ENCODE measurements at regions of chr3 and their contacts with region 1.

Region 1: GRCh38 chr3:138230525-138230924 is 43.4 kb downstream of the ARMC8 start:
- DNase-seq: no peak
- H3K4me3 ChIP-seq: no peak overlapping the region
- H3K27ac ChIP-seq: no peak overlapping the region
- H3K4me1 ChIP-seq: no peaks in the 10 kb centered on the region
- H3K27me3 ChIP-seq: no peaks in the 10 kb centered on the region
- CTCF ChIP-seq: no peak
- POLR2A ChIP-seq: no peak

Region 2: DNA sequence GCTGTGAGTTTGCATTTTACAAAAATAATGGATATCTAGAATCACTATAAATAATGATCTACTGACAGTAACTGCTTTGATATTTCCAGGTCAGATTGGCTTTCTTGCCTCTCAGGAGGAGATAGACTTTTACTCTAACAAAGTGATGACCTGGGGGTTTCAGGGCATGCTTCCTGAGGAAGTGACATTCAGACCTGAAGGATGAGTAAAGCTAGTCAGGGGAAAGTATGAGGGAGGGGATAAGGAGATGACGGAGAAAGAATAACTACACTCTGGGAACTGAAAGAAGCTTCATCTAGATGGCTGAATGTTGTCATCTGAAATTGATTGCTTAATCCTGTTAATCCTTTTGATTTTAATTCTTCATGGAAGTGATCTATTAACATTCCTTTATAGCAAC is 11.3 kb before region 1 on chr3:
- CTCF ChIA-PET with region 1: interaction called, 6 read pairs
- POLR2A ChIA-PET with region 1: no interaction called
- dilution Hi-C with region 1: no loop called
- intact Hi-C with region 1: loop called (anchors 2 kb)
- DNase-seq: peak; percentile 64
- H3K4me3 ChIP-seq: peak overlapping the region in 1 of 3 experiments; percentile 15
- H3K27ac ChIP-seq: peak overlapping the region; percentile 40
- H3K4me1 ChIP-seq: peaks cover 35% of the 10 kb centered on the region
- H3K27me3 ChIP-seq: no peaks in the 10 kb centered on the region
- CTCF ChIP-seq: no peak
- POLR2A ChIP-seq: no peak

Measured in endothelial cell of umbilical vein (primary cell).